ENCODE measurements at regions of chr3 and their contacts with region 1.

Region 1: DNA sequence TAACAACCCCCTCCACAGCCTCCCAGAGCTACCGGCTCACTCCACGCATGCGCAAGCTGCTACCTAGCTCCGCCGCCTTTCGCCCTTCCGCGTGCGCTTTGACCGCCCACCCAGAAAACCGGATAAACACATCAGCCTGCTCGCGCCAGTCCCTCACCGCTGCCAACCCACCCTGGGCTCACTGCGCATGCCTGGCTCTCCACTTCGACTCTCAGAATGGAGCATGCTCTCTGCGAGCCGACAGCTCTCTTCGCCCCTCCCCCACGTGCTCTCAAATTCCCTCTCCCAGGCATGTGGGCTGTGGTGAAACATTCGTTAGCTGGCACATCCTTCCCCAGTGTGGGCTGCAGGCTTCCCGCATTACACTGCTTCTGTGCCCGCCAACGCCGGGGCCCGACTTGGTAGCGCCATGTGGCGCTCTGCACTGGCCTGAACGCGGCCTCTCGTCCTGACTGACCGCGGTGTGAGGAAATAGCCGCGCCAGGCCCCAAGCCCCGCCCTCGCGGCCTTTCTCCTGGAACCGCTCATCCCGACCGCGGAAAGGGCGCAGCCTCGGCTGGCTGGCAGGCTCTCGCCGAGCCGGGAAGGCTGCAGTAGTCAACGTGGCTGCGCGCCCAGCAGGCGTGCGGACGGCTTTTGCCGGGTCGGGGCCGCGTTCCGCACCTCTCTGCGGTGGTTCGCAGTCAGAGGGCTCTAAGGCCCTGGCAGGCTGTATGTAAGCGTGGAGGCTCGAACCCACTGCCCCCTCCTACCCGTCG is 445 bp upstream of the MSL2 start:
- DNase-seq: peak; percentile 96 to 99 (median 97)
- H3K4me3 ChIP-seq: peak overlapping the region; percentile 89
- H3K4me3 Mint-ChIP-seq: peak overlapping the region; percentile 96 to 100 (median 98)
- H3K27ac ChIP-seq: peak overlapping the region; percentile 84
- H3K27ac Mint-ChIP-seq: peak overlapping the region; percentile 98 to 100 (median 99)
- H3K4me1 ChIP-seq: peaks cover 24% of the 10 kb centered on the region
- H3K4me1 Mint-ChIP-seq: peaks cover 32 to 39% (median 39%) of the 10 kb centered on the region in 3 donors
- H3K27me3 ChIP-seq: no peaks in the 10 kb centered on the region
- H3K27me3 Mint-ChIP-seq: peaks cover 0 to 15% of the 10 kb centered on the region in 2 donors

Region 2: DNA sequence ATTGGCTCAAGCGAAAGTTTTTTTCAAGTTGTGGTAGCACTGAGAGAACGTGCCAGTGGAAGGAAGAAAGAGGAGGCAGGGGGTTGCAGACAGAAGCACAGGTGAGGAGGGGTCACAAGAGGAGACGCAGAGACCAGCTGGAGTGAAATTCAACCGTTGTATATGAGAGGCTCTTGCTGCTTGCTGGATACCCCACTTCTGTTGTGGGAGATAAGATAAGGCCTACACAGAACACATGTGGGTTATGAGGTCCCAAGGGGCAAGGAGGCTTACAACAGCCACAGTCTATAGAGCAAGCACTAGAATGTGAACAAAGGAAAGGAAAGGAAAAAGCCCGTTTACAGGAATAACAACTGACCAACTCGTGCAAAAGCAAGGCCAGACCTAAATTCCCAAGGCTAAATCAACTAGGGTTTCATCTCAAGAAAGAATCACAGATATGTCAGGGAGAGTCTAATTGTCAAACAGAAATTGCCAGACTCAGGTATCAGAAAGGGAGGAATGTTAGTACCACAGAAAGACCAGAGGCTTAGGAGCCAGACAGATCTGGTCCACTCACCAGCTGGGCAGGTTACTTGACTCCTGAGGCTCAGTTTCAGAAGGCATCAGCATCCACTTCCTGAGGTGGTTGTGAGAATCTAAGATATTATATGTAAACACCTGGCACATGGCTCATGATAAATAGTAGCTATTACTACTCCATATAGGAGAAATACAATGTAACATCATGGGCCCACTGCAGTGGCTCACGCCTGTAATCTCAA is 61.4 kb before region 1 on chr3:
- CTCF ChIA-PET with region 1: no interaction called
- POLR2A ChIA-PET with region 1: no interaction called
- DNase-seq: no peak
- H3K4me3 ChIP-seq: no peak overlapping the region
- H3K4me3 Mint-ChIP-seq: no peak overlapping the region
- H3K27ac ChIP-seq: no peak overlapping the region
- H3K27ac Mint-ChIP-seq: peak overlapping the region in 1 of 8 donors; percentile 63
- H3K4me1 ChIP-seq: no peaks in the 10 kb centered on the region
- H3K4me1 Mint-ChIP-seq: peaks cover 0 to 1% (median 0%) of the 10 kb centered on the region in 3 donors
- H3K27me3 ChIP-seq: no peaks in the 10 kb centered on the region
- H3K27me3 Mint-ChIP-seq: no peaks in the 10 kb centered on the region

Region 3: GRCh38 chr3:136151219-136151618 is 45.4 kb before region 1 on chr3:
- CTCF ChIA-PET with region 1: no interaction called
- POLR2A ChIA-PET with region 1: interaction called, 10 read pairs
- DNase-seq: no peak
- H3K4me3 ChIP-seq: no peak overlapping the region
- H3K4me3 Mint-ChIP-seq: no peak overlapping the region
- H3K27ac ChIP-seq: no peak overlapping the region
- H3K27ac Mint-ChIP-seq: peak overlapping the region in 6 of 8 donors; percentile 5 to 61 (median 32)
- H3K4me1 ChIP-seq: peaks cover 12% of the 10 kb centered on the region
- H3K4me1 Mint-ChIP-seq: peaks cover 70 to 90% (median 80%) of the 10 kb centered on the region in 3 donors
- H3K27me3 ChIP-seq: no peaks in the 10 kb centered on the region
- H3K27me3 Mint-ChIP-seq: no peaks in the 10 kb centered on the region

Region 4: DNA sequence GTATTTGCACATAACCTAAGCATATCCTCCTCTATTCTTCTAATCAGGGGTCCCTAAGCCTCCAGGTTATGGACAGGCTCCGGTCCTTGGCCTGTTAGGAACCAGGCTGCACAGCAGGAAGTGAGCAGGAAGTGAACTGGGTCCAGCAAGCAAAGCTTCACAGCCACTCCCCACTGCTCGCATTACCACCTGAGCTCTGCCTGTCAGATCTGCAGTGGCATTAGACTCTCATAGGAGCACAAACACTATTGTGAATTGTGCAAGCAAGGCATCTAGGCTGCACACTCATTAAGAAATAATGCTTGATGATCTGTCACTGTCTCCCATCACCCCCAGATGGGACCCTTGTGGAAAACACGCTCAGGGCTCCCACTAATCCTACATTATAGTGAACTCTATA is 10.2 kb before region 1 on chr3:
- CTCF ChIA-PET with region 1: interaction called, 7 read pairs
- POLR2A ChIA-PET with region 1: interaction called, 11 read pairs
- DNase-seq: peak in 2 of 5 donors; percentile 12 to 14
- H3K4me3 ChIP-seq: peak overlapping the region; percentile 4
- H3K4me3 Mint-ChIP-seq: peak overlapping the region; percentile 18 to 82 (median 71)
- H3K27ac ChIP-seq: no peak overlapping the region
- H3K27ac Mint-ChIP-seq: peak overlapping the region in 7 of 8 donors; percentile 42 to 86 (median 70)
- H3K4me1 ChIP-seq: peaks cover 91% of the 10 kb centered on the region
- H3K4me1 Mint-ChIP-seq: peaks cover 86 to 98% (median 96%) of the 10 kb centered on the region in 3 donors
- H3K27me3 ChIP-seq: no peaks in the 10 kb centered on the region
- H3K27me3 Mint-ChIP-seq: no peaks in the 10 kb centered on the region

Region 5: DNA sequence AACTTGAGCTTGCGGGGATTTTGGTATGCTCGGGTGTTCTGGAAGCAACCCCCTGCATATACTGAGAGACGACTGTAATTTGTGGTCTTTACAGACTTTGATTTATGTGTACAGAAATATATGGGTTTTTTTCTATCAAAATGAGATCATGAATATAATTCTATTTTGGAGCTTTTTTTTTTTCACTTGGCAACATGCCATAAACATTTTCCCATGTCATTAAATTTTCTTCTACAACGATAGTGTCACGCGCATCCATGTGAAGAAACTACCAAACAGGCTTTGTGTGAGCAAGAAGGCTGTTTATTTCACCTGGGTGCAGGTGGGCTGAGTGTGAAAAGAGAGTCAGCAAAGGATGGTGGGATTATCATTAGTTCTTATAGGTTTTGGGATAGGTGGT is 20.6 kb after region 1 on chr3:
- CTCF ChIA-PET with region 1: no interaction called
- POLR2A ChIA-PET with region 1: no interaction called
- DNase-seq: no peak
- H3K4me3 ChIP-seq: no peak overlapping the region
- H3K4me3 Mint-ChIP-seq: no peak overlapping the region
- H3K27ac ChIP-seq: no peak overlapping the region
- H3K27ac Mint-ChIP-seq: no peak overlapping the region
- H3K4me1 ChIP-seq: no peaks in the 10 kb centered on the region
- H3K4me1 Mint-ChIP-seq: no peaks in the 10 kb centered on the region
- H3K27me3 ChIP-seq: no peaks in the 10 kb centered on the region
- H3K27me3 Mint-ChIP-seq: peaks cover 12% of the 10 kb centered on the region in 2 donors

Region 6: GRCh38 chr3:136250226-136250902 is 53.8 kb after region 1 on chr3 and contains the start of gene PCCB:
- CTCF ChIA-PET with region 1: interaction called, 6 read pairs
- POLR2A ChIA-PET with region 1: interaction called, 29 read pairs
- DNase-seq: peak; percentile 82 to 96 (median 92)
- H3K4me3 ChIP-seq: peak within 1 kb of the TSS; percentile 87
- H3K4me3 Mint-ChIP-seq: peak within 1 kb of the TSS; percentile 91 to 95 (median 93)
- H3K27ac ChIP-seq: peak within 1 kb of the TSS; percentile 72
- H3K27ac Mint-ChIP-seq: peak within 1 kb of the TSS; percentile 83 to 95 (median 93)
- H3K4me1 ChIP-seq: peaks cover 15% of the 10 kb centered on the region
- H3K4me1 Mint-ChIP-seq: peaks cover 17 to 26% (median 21%) of the 10 kb centered on the region in 3 donors
- H3K27me3 ChIP-seq: no peaks in the 10 kb centered on the region
- H3K27me3 Mint-ChIP-seq: no peaks in the 10 kb centered on the region
- total RNA-seq, gene PCCB: 40.6 to 41.7 TPM

Measured in CD8-positive, alpha-beta memory T cell (primary cell).